H1 (cell line): ENCODE measurements at regions of chr5 and their contacts with region 1.

Region 1: DNA sequence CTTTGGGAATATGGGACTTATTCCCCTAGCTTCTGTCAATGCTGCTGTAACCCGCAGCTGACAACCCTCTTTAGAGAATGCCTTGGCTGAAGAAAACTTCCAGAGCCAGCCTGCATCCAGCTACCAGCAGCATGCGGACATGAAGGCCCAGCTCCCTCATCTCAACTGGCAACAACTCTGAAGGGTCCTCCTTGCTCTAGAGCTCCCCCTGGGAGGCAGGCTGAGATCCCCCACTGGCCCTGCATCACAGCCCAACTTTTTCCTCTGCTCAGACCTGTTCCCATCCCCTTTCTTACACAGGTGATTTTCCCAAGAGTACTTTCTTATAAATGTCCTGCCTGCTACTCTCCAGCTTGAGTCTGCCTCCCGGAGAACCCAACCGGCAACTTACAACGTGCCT is 18.7 kb upstream of the WNT8A start:
- DNase-seq: peak; percentile 23 to 79
- H3K4me3 ChIP-seq: no peak overlapping the region
- H3K27ac ChIP-seq: no peak overlapping the region
- H3K4me1 ChIP-seq: no peaks in the 10 kb centered on the region
- H3K27me3 ChIP-seq: no peaks in the 10 kb centered on the region
- CTCF ChIP-seq: peak; percentile 76 to 85 (median 80)
- EP300 ChIP-seq: no peak
- POLR2A ChIP-seq: no peak
- RAD21 ChIP-seq: peak; percentile 53 to 55

Region 2: GRCh38 chr5:137923856-137924255 is 141.2 kb before region 1 on chr5:
- CTCF ChIA-PET with region 1: no interaction called
- POLR2A ChIA-PET with region 1: no interaction called
- DNase-seq: no peak
- H3K4me3 ChIP-seq: no peak overlapping the region
- H3K27ac ChIP-seq: no peak overlapping the region
- H3K4me1 ChIP-seq: no peaks in the 10 kb centered on the region
- H3K27me3 ChIP-seq: no peaks in the 10 kb centered on the region
- CTCF ChIP-seq: peak in 1 of 3 experiments; percentile 2; a peak in 1 of 4 replicates
- EP300 ChIP-seq: no peak
- POLR2A ChIP-seq: no peak
- RAD21 ChIP-seq: 0 out of 4 replicates have a peak, but pooled peaks of 1 of the 2 experiments have one; percentile 6

Region 3: GRCh38 chr5:138028971-138029365 is 36.1 kb before region 1 on chr5:
- CTCF ChIA-PET with region 1: interaction called, 179 read pairs
- POLR2A ChIA-PET with region 1: interaction called, 4 read pairs
- DNase-seq: no peak
- H3K4me3 ChIP-seq: no peak overlapping the region
- H3K27ac ChIP-seq: no peak overlapping the region
- H3K4me1 ChIP-seq: peaks cover 3 to 7% (median 4%) of the 10 kb centered on the region in 4 experiments; a peak in 3 of 7 replicates
- H3K27me3 ChIP-seq: no peaks in the 10 kb centered on the region
- CTCF ChIP-seq: no peak
- EP300 ChIP-seq: no peak
- POLR2A ChIP-seq: no peak
- RAD21 ChIP-seq: no peak

Region 4: DNA sequence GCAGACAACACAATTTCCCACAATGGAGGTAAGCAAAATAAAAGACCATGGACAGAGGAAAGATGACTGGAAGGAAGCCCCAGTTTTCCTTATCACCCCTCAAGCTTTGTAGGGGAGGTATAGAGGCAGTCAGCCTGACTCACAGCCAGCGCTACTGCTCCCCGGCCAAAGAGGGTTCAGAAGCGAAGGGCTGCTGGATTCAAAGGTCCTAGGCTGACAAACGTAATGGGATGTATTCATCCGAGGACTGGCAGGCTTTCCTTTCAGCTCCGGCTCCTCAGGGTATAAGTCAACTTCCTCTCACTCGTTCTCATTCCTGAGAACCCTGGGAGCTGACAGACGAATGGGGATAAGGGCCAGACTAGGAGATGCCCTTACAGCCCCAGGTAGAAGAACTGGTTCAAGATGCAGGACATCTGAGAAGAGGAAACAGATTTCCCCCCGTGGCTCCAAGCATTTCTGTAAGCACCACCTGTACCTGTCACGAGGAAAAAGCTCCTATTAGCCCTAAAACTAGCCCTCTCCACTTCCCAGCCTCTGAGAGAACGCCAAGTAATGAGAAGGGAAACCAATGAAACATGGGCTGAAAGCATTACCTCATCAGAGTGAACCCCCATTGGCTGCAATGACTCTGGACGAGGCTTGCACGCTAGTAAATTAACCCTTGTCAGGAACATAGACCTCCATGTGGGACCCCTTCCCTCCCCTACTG is 10.1 kb before region 1 on chr5:
- CTCF ChIA-PET with region 1: interaction called, 12 read pairs
- POLR2A ChIA-PET with region 1: no interaction called
- DNase-seq: no peak
- H3K4me3 ChIP-seq: peak overlapping the region in 1 of 4 experiments; percentile 4; a peak in 1 of 8 replicates
- H3K27ac ChIP-seq: no peak overlapping the region
- H3K4me1 ChIP-seq: peaks cover 0 to 3% (median 0%) of the 10 kb centered on the region in 4 experiments; a peak in 1 of 7 replicates
- H3K27me3 ChIP-seq: no peaks in the 10 kb centered on the region
- CTCF ChIP-seq: no peak
- EP300 ChIP-seq: no peak
- POLR2A ChIP-seq: no peak
- RAD21 ChIP-seq: no peak

Region 5: DNA sequence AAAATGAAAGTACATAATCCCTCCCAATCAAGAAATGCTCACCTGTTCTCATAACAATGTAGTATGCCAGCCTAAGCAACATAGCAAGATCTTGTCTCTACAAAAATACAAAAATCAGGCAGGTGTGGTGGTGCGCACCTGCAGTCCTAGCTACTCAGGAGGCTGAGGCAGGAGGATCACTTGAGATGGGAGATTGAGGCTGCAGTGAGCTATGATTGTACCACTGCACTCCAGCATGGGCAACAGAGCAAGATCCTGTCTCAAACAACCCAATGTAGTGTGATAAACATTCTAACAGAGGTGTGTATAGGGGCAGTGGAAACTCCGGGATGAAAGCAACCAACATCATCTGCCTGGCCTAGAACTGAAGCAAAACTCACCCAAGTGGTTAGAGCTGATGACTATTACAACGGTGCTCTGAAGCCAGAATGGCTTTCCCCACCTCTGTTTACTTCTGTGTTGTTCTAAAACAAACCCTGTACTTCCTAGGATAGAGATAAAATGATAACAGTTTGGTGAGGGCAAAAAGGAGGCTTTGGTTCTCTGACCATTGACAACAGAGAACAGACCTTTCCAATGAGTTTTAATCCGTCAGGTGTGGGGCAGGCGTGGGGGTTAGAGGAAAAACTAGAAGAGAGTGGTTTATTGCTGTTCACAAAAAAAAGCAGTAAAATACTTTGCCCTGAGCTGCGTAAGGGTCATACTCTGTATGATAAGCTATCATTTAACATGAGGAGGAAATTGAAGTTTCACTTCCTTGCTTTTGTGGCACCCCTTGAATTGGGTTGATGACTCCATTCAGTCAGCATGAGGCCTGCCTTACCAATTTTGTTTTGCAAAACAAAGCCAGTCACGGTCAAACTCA is 37.6 kb after region 1 on chr5:
- CTCF ChIA-PET with region 1: interaction called, 10 read pairs
- POLR2A ChIA-PET with region 1: no interaction called
- DNase-seq: no peak
- H3K4me3 ChIP-seq: peak overlapping the region in 2 of 4 experiments; percentile 5 to 11; a peak in 3 of 8 replicates
- H3K27ac ChIP-seq: no peak overlapping the region
- H3K4me1 ChIP-seq: peaks cover 0 to 9% (median 3%) of the 10 kb centered on the region in 4 experiments; a peak in 3 of 7 replicates
- H3K27me3 ChIP-seq: peaks cover 7 to 23% (median 9%) of the 10 kb centered on the region in 4 experiments
- CTCF ChIP-seq: no peak
- EP300 ChIP-seq: no peak
- POLR2A ChIP-seq: no peak
- RAD21 ChIP-seq: no peak